Calu3 (cell line): ENCODE measurements at regions of chr10 and their contacts with region 1.

Region 1: DNA sequence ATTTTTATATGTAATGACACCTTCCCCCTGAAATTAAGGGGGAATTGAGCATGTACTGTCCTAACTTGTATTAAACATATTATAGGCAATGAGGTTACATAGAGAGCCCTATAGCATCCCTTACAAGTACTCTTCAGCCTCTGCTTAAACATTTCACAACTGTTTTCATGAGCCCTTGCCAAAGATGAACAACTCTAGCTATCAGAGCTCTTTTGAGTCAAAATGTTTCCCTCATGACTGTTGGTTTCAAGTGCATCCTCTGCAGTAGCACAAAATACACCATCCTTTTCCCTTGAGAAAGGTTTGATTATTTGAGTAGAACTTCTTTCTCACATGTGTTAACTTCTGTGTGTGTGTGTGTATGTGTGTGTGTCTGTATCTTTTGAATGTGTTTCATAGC is 1157.6 kb upstream of the CELF2 start:
- DNase-seq: no peak
- H3K4me3 Mint-ChIP-seq: no peak overlapping the region
- H3K27ac Mint-ChIP-seq: no peak overlapping the region
- H3K4me1 Mint-ChIP-seq: no peaks in the 10 kb centered on the region
- H3K27me3 Mint-ChIP-seq: no peaks in the 10 kb centered on the region
- CTCF ChIP-seq: no peak

Region 2: GRCh38 chr10:9608602-9609001 is 251.4 kb before region 1 on chr10:
- CTCF ChIA-PET with region 1: no interaction called
- intact Hi-C with region 1: loop called (anchors 5 kb)
- DNase-seq: no peak
- H3K4me3 Mint-ChIP-seq: no peak overlapping the region
- H3K27ac Mint-ChIP-seq: no peak overlapping the region
- H3K4me1 Mint-ChIP-seq: no peaks in the 10 kb centered on the region
- H3K27me3 Mint-ChIP-seq: no peaks in the 10 kb centered on the region
- CTCF ChIP-seq: no peak

Region 3: DNA sequence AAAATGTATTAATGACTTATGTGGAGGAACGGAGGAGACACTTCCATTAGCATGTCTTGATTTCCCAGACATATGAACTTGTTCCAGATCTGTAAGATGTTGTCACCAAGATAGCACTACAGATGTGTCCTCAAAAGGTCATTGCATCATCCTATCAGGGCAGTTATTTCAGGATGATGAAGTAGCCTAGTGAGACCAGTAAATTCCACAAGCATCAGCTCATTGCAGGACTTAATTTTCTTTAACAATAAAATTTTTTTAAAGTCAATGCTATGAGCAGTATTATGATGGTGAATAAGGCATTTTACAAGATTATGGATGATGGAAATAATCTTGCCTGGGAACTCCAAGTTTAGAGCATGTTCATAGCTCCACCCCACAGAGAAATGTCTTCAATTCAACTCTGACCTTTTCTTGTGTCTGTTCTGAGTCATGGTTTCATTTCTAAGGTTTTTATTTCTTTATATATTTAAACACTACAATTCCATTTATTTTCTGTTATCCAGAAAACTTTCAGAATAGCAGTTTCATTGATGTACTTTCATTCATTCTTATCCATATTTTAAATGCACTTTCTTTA is 45.7 kb before region 1 on chr10:
- CTCF ChIA-PET with region 1: no interaction called
- intact Hi-C with region 1: no loop called
- DNase-seq: no peak
- H3K4me3 Mint-ChIP-seq: no peak overlapping the region
- H3K27ac Mint-ChIP-seq: no peak overlapping the region
- H3K4me1 Mint-ChIP-seq: no peaks in the 10 kb centered on the region
- H3K27me3 Mint-ChIP-seq: no peaks in the 10 kb centered on the region
- CTCF ChIP-seq: no peak